GM12878 (cell line): ENCODE measurements at regions of chr6 and their contacts with region 1.

Region 1: GRCh38 chr6:44074439-44075136 is 52.7 kb downstream of the MRPL14 start:
- DNase-seq: peak; percentile 75
- ATAC-seq: peak; percentile 71
- H3K4me3 ChIP-seq: peak overlapping the region; percentile 92
- H3K27ac ChIP-seq: peak overlapping the region; percentile 85
- H3K4me1 ChIP-seq: peaks cover 52% of the 10 kb centered on the region
- H3K27me3 ChIP-seq: no peaks in the 10 kb centered on the region
- CTCF ChIP-seq: peak; percentile 87 to 91 (median 89)
- EP300 ChIP-seq: peak; percentile 36 to 44; a peak in 1 of 4 replicates
- POLR2A ChIP-seq: no peak; the same call in 1 of the 2 replicates
- RAD21 ChIP-seq: peak; percentile 78

Region 2: DNA sequence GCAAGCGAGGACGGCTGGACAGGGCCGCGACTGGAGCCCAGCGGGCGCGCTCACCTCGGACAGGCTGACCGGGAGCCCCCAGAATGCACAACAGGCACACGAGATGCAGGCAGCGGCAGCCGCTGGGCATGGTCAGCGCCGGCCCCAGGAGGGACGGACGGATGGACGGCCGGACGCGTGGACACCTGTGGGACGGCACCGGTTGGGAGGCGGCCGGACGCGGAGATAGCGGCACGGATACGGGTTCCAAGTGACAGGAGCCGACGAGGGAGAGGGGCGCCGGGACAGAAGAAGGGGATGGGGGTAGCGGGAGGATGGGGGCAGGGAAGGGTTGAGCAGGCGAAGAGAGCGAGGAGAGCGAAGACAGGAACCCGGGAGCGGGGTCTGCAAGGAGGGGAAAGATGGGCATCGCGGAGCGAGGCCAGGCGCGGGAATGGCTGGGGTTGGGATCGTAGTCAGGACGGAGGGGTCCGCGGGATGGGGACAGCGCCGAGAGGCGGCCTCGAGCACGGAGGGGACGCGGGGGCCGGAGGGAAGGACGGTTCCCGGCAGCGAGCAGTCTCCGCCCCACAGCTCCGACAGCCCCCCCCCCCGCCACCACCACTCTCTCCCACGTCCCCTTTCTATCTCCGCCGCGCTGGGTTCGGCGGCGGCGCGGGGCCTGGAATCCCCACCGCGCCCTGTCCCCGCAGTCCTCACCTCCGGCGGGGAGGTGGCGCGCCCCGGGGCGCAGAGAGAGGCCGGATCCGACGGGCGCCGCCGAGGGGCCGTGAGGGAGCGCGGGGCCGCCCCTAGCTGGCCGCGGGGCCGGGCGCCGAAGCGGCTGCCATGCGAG is 619.7 kb before region 1 on chr6:
- CTCF ChIA-PET with region 1: no interaction called
- POLR2A ChIA-PET with region 1: no interaction called
- RAD21 ChIA-PET with region 1: no interaction called
- SMC1A ChIA-PET with region 1: no interaction called
- in situ Hi-C with region 1: no loop called
- intact Hi-C with region 1: loop called (anchors 10 kb)
- DNase-seq: no peak
- ATAC-seq: peak; percentile 92
- H3K4me3 ChIP-seq: peak overlapping the region; percentile 80; the same call in 1 of the 2 replicates
- H3K27ac ChIP-seq: no peak overlapping the region
- H3K4me1 ChIP-seq: peaks cover 14% of the 10 kb centered on the region
- H3K27me3 ChIP-seq: peaks cover 2 to 3% of the 10 kb centered on the region in 2 experiments; a peak in 3 of 4 replicates
- CTCF ChIP-seq: no peak
- EP300 ChIP-seq: no peak
- POLR2A ChIP-seq: 0 out of 2 replicates have a peak, but pooled peaks have one; percentile 38
- RAD21 ChIP-seq: no peak

Region 3: DNA sequence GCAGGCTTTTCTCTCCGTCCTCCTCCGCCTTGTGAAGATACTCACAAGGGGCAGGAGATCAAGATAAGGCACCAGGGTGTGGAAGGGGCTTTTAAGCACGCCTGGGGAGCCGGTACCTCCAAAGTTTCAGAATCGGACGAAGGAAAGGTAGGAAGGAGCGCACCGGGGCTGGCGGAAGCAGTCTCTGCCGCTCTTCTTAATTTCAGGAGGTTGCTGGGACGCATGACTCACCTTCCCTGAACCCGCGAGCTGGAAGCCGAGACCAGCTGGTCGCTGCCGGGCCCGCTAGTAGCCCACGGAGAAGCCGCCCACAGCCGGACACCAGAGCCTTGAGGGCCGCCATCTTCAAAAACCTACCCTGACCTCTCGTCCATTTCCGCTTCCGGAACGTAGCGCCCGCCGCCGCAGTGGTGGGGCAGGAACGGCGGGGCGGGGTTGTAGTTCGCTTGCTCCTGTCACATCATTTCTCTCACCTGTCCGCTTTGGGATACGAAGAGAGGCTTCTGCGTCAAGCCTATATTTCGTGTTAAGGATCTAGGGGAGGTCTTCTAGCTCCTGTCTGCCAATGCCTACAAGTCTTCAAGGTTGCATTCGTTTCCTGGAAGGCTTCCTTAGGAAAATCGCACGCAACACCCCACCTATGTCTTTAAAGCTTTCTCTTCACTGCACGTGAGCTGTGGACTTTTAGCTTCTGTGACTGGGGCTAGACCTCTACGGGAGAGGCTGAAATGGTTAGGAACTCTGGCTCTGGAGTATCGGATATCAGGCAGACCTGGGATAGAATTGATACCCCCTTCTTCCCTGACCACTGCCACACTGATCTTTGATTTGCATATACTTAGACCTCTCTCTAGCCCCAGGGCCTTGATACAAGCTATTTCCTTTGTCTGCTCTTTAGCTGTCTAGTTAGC is 386.9 kb before region 1 on chr6 and contains the start of gene MRPS18A:
- CTCF ChIA-PET with region 1: interaction called, 5 read pairs
- POLR2A ChIA-PET with region 1: no interaction called
- RAD21 ChIA-PET with region 1: interaction called, 3 read pairs
- SMC1A ChIA-PET with region 1: interaction called, 11 read pairs
- in situ Hi-C with region 1: no loop called
- intact Hi-C with region 1: no loop called
- DNase-seq: no peak
- ATAC-seq: peak; percentile 98
- H3K4me3 ChIP-seq: peak within 1 kb of the TSS; percentile 98
- H3K27ac ChIP-seq: peak within 1 kb of the TSS; percentile 86
- H3K4me1 ChIP-seq: peaks cover 18% of the 10 kb centered on the region
- H3K27me3 ChIP-seq: no peaks in the 10 kb centered on the region
- CTCF ChIP-seq: no peak
- EP300 ChIP-seq: no peak
- POLR2A ChIP-seq: peak; percentile 89
- RAD21 ChIP-seq: no peak
- polyA plus RNA-seq, gene MRPS18A: 105 to 158 TPM

Region 4: GRCh38 chr6:43758617-43759050 is 316.0 kb before region 1 on chr6:
- CTCF ChIA-PET with region 1: interaction called, 43 read pairs
- POLR2A ChIA-PET with region 1: no interaction called
- RAD21 ChIA-PET with region 1: interaction called, 4 read pairs
- SMC1A ChIA-PET with region 1: interaction called, 4 read pairs
- in situ Hi-C with region 1: no loop called
- intact Hi-C with region 1: no loop called
- DNase-seq: no peak
- ATAC-seq: peak; percentile 85
- H3K4me3 ChIP-seq: no peak overlapping the region
- H3K27ac ChIP-seq: no peak overlapping the region
- H3K4me1 ChIP-seq: peaks cover 10% of the 10 kb centered on the region
- H3K27me3 ChIP-seq: no peaks in the 10 kb centered on the region
- CTCF ChIP-seq: peak; percentile 67 to 88 (median 84)
- EP300 ChIP-seq: no peak
- POLR2A ChIP-seq: no peak
- RAD21 ChIP-seq: peak; percentile 62

Region 5: DNA sequence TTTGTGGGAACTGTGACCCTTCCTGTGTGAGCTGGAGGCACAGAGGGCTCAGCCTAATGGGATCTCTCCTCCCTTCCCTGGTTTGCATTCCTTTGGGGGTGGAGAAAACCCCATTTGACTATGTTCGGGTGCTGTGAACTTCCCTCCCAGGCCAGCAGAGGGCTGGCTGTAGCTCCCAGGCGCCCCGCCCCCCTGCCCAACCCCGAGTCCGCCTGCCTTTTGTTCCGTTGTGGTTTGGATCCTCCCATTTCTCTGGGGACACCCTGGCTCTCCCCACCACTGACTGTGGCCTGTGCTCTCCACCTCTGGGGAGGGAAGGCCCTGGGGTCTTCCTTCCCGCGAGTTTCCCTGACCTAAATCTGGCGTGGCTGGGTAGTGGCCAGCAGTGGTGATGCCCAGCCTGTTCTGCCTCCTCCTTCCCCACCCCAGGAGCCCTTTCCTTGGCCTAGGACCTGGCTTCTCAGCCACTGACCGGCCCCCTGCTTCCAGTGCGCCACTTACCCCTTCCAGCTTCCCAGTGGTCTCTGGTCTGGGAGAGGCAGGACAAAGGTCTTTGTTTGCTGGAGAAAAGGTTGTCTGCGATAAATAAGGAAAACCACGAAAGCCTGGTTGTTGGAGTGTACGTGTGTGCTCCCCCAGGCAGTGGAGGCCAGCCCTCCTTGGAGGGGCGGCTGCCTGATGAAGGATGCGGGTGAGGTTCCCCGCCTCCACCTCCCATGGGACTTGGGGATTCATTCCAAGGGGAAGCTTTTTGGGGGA is 299.6 kb before region 1 on chr6:
- CTCF ChIA-PET with region 1: interaction called, 264 read pairs
- POLR2A ChIA-PET with region 1: interaction called, 97 read pairs
- RAD21 ChIA-PET with region 1: interaction called, 179 read pairs
- SMC1A ChIA-PET with region 1: interaction called, 78 read pairs
- in situ Hi-C with region 1: loop called (anchors 5 kb)
- intact Hi-C with region 1: no loop called
- DNase-seq: no peak
- ATAC-seq: peak; percentile 22
- H3K4me3 ChIP-seq: peak overlapping the region; percentile 98
- H3K27ac ChIP-seq: no peak overlapping the region
- H3K4me1 ChIP-seq: peaks cover 22% of the 10 kb centered on the region
- H3K27me3 ChIP-seq: no peaks in the 10 kb centered on the region
- CTCF ChIP-seq: peak; percentile 81 to 96 (median 87)
- EP300 ChIP-seq: no peak
- POLR2A ChIP-seq: no peak
- RAD21 ChIP-seq: peak; percentile 53

Region 6: DNA sequence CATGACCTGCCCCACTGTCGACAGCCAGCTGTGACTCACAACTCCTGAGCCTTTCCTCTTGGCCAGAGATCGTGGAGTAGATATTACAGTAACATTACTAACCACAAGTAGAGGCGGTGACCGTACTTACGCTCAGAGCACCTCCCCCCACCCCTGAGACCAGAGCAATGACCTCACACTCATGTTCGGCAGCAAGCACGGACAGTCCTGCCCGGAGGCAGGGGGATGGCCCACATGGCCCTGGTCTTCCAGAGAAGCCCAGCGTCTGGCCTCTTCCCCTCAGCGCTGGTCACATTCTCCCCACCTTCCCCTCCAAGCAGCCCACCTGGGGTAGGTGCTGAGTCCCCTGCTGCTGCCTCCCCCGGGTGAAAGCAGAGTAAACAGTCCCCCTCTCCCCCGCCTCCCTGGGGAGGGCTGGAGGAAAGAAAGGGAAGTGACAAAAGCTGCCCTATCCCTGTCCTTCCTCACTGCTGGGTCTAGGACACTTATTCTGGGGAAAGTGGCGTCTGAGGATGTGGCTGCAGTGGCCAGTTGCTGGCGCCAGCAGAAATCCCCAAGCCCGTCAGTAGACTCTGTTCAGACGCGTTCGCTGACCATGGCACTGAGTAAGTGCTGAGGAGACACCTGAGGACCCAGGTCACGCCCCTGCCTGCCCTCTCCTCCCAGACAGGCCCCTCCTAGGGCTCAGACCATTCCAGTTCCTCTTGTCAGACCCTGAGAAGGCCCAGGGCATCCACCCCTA is 15.8 kb before region 1 on chr6:
- CTCF ChIA-PET with region 1: interaction called, 50 read pairs
- POLR2A ChIA-PET with region 1: interaction called, 13 read pairs
- RAD21 ChIA-PET with region 1: interaction called, 5 read pairs
- SMC1A ChIA-PET with region 1: interaction called, 4 read pairs
- in situ Hi-C with region 1: no loop called
- intact Hi-C with region 1: no loop called
- DNase-seq: no peak
- ATAC-seq: peak; percentile 80
- H3K4me3 ChIP-seq: no peak overlapping the region
- H3K27ac ChIP-seq: no peak overlapping the region
- H3K4me1 ChIP-seq: peaks cover 24% of the 10 kb centered on the region
- H3K27me3 ChIP-seq: no peaks in the 10 kb centered on the region
- CTCF ChIP-seq: no peak
- EP300 ChIP-seq: no peak; a peak in 1 of 4 replicates
- POLR2A ChIP-seq: no peak
- RAD21 ChIP-seq: no peak

Region 7: GRCh38 chr6:44223319-44224028 is 148.9 kb after region 1 on chr6 and contains the start of gene SLC29A1:
- CTCF ChIA-PET with region 1: no interaction called
- POLR2A ChIA-PET with region 1: no interaction called
- RAD21 ChIA-PET with region 1: no interaction called
- SMC1A ChIA-PET with region 1: no interaction called
- in situ Hi-C with region 1: no loop called
- intact Hi-C with region 1: no loop called
- DNase-seq: no peak
- ATAC-seq: peak; percentile 53
- H3K4me3 ChIP-seq: peak within 1 kb of the TSS; percentile 83
- H3K27ac ChIP-seq: peak within 1 kb of the TSS; percentile 43
- H3K4me1 ChIP-seq: peaks cover 27% of the 10 kb centered on the region
- H3K27me3 ChIP-seq: no peaks in the 10 kb centered on the region
- CTCF ChIP-seq: 0 out of 6 replicates have a peak, but pooled peaks of 1 of the 3 experiments have one; percentile 13
- EP300 ChIP-seq: no peak
- POLR2A ChIP-seq: peak; percentile 89
- RAD21 ChIP-seq: no peak
- polyA plus RNA-seq, gene SLC29A1: 10.0 to 15.7 TPM